ENCODE measurements at regions of chr7 and their contacts with region 1.

Region 1: DNA sequence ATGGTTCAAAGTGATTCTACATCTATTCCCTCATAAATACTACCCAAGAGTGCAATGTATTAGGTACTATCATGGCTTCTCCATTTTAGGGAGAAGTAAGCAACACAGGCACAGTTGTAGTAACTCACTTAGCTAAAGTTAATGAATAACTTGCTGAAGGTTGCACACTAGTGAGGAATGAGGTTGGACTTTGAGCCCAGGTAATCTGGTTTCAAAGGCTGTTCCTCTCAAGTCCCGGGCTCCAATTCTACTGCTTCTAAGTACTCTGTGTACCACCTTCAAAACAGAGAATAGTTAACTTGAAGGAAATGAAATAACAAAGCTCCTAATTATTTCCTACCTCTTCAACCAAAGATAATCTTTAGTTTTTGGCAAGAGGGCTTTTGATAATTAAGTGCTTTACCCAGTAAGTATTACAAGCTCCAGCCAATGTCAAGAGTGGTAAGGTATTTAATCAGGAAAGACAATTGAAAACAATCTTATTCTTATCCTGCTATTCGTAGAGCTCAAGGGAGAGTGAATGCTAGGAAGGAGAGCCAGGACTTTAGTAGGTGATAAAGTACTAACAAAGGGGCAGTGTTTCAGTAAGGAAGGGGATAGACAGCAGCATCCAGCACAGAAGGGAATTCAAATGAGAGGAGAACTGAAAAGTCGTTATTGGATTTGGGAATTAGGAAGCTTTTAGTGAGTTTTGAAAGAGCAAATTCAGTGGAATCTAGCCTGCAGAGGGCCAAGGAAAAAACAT is 158.2 kb upstream of the PTPRZ1 start:
- DNase-seq: peak; percentile 74 to 79
- H3K4me3 ChIP-seq: peak overlapping the region; percentile 5; the same call in 1 of the 2 replicates
- H3K4me3 Mint-ChIP-seq: peak overlapping the region; percentile 50
- H3K27ac Mint-ChIP-seq: peak overlapping the region; percentile 63
- H3K4me1 ChIP-seq: peaks cover 44% of the 10 kb centered on the region
- H3K4me1 Mint-ChIP-seq: peaks cover 18% of the 10 kb centered on the region
- H3K27me3 ChIP-seq: no peaks in the 10 kb centered on the region
- H3K27me3 Mint-ChIP-seq: no peaks in the 10 kb centered on the region
- CTCF ChIP-seq: no peak

Region 2: GRCh38 chr7:121428855-121429489 is 285.8 kb before region 1 on chr7:
- CTCF ChIA-PET with region 1: no interaction called
- POLR2A ChIA-PET with region 1: no interaction called
- intact Hi-C with region 1: loop called (anchors 10 kb)
- DNase-seq: peak in 1 of 2 experiments; percentile 36
- H3K4me3 ChIP-seq: no peak overlapping the region
- H3K4me3 Mint-ChIP-seq: no peak overlapping the region
- H3K27ac Mint-ChIP-seq: no peak overlapping the region
- H3K4me1 ChIP-seq: peaks cover 24% of the 10 kb centered on the region
- H3K4me1 Mint-ChIP-seq: peaks cover 13% of the 10 kb centered on the region
- H3K27me3 ChIP-seq: no peaks in the 10 kb centered on the region
- H3K27me3 Mint-ChIP-seq: no peaks in the 10 kb centered on the region
- CTCF ChIP-seq: no peak

Region 3: DNA sequence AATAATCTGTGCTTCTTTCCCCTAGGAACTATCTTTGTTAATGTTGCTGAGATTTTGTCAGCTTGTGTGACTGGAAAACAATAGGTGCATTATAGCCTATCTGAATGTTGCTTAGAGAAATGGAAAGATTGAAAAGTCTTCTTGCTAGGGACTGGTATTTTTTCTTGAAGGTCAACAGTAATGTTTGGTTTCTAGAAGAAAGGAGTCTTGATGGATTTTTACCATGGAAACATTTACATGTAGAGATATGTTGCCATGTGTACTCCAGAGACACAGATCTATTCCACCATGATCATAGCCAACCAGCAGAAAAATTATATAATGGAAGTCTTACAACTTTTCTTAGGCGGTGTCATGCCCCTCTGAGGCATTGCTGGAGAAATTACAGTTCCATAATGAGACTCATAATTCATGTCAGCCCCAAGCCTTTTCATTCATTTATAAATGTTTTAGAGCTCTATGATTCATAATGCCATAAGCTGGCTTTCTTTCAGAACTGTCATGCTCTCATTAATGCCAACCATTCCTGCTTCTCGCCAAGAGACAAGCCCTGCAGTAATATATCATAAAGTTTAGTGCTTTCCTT is 16.9 kb before region 1 on chr7:
- CTCF ChIA-PET with region 1: no interaction called
- POLR2A ChIA-PET with region 1: no interaction called
- intact Hi-C with region 1: no loop called
- DNase-seq: no peak
- H3K4me3 ChIP-seq: no peak overlapping the region
- H3K4me3 Mint-ChIP-seq: no peak overlapping the region
- H3K27ac Mint-ChIP-seq: no peak overlapping the region
- H3K4me1 ChIP-seq: no peaks in the 10 kb centered on the region
- H3K4me1 Mint-ChIP-seq: no peaks in the 10 kb centered on the region
- H3K27me3 ChIP-seq: no peaks in the 10 kb centered on the region
- H3K27me3 Mint-ChIP-seq: peaks cover 6% of the 10 kb centered on the region
- CTCF ChIP-seq: no peak

Region 4: DNA sequence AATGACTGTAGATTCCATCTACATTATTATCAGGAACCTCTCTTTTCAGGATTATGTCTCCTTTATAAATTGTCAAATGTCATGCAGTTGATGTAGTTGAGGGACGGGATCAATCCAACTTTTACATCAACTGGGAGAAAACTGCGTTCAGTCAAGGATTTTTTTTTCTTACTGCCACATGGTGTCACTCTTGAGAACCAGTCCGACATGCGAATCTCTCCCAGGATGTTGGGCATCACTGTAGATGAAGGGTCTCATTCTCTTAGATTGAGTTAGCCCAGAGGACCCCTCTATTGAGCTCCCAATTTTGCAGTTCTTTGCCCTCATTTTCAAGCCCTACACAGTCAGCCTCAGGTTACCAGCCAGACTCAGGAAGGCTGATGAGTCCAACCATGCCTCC is 38.0 kb after region 1 on chr7:
- CTCF ChIA-PET with region 1: no interaction called
- POLR2A ChIA-PET with region 1: no interaction called
- intact Hi-C with region 1: loop called (anchors 2 kb)
- DNase-seq: peak in 1 of 2 experiments; percentile 5
- H3K4me3 ChIP-seq: no peak overlapping the region
- H3K4me3 Mint-ChIP-seq: no peak overlapping the region
- H3K27ac Mint-ChIP-seq: no peak overlapping the region
- H3K4me1 ChIP-seq: no peaks in the 10 kb centered on the region
- H3K4me1 Mint-ChIP-seq: no peaks in the 10 kb centered on the region
- H3K27me3 ChIP-seq: no peaks in the 10 kb centered on the region
- H3K27me3 Mint-ChIP-seq: peaks cover 9% of the 10 kb centered on the region
- CTCF ChIP-seq: peak; percentile 29 to 40

Region 5: DNA sequence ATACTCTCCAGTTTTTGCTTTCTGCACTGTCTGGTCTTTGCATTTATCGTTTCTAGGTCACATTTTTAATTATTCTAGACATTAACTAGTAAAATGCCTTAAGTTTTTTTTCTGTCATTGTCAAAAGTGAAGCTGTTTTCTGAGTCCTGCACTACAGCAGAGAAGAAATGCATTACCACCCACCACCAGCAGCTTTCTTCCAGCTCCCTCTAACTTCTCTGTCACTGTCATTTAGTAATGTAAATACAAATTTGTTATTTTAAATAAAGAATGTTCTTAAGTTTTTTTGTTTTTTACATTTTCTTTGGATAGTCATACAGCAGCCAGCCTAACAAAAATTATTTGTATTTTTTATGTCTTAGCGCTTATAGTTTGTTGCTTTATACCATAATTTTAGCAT is 177.0 kb after region 1 on chr7:
- CTCF ChIA-PET with region 1: no interaction called
- POLR2A ChIA-PET with region 1: no interaction called
- intact Hi-C with region 1: no loop called
- DNase-seq: no peak
- H3K4me3 ChIP-seq: no peak overlapping the region
- H3K4me3 Mint-ChIP-seq: no peak overlapping the region
- H3K27ac Mint-ChIP-seq: no peak overlapping the region
- H3K4me1 ChIP-seq: no peaks in the 10 kb centered on the region
- H3K4me1 Mint-ChIP-seq: no peaks in the 10 kb centered on the region
- H3K27me3 ChIP-seq: no peaks in the 10 kb centered on the region
- H3K27me3 Mint-ChIP-seq: peaks cover 2% of the 10 kb centered on the region
- CTCF ChIP-seq: no peak